ENCODE measurements at regions of chr7 and their contacts with region 1.

Region 1: GRCh38 chr7:2460188-2460587 is 16.0 kb downstream of the GRIFIN start:
- DNase-seq: no peak
- H3K4me3 Mint-ChIP-seq: no peak overlapping the region
- H3K27ac Mint-ChIP-seq: no peak overlapping the region
- H3K4me1 Mint-ChIP-seq: peaks cover 10% of the 10 kb centered on the region
- H3K27me3 Mint-ChIP-seq: no peaks in the 10 kb centered on the region
- CTCF ChIP-seq: no peak

Region 2: GRCh38 chr7:2471396-2471795 is 11.2 kb after region 1 on chr7:
- CTCF ChIA-PET with region 1: interaction called, 10 read pairs
- POLR2A ChIA-PET with region 1: interaction called, 3 read pairs
- intact Hi-C with region 1: no loop called
- DNase-seq: peak; percentile 59
- H3K4me3 Mint-ChIP-seq: no peak overlapping the region
- H3K27ac Mint-ChIP-seq: peak overlapping the region; percentile 9
- H3K4me1 Mint-ChIP-seq: peaks cover 24% of the 10 kb centered on the region
- H3K27me3 Mint-ChIP-seq: no peaks in the 10 kb centered on the region
- CTCF ChIP-seq: no peak

Measured in MCF 10A (cell line).